ENCODE measurements at regions of chr3 and their contacts with region 1.

Region 1: DNA sequence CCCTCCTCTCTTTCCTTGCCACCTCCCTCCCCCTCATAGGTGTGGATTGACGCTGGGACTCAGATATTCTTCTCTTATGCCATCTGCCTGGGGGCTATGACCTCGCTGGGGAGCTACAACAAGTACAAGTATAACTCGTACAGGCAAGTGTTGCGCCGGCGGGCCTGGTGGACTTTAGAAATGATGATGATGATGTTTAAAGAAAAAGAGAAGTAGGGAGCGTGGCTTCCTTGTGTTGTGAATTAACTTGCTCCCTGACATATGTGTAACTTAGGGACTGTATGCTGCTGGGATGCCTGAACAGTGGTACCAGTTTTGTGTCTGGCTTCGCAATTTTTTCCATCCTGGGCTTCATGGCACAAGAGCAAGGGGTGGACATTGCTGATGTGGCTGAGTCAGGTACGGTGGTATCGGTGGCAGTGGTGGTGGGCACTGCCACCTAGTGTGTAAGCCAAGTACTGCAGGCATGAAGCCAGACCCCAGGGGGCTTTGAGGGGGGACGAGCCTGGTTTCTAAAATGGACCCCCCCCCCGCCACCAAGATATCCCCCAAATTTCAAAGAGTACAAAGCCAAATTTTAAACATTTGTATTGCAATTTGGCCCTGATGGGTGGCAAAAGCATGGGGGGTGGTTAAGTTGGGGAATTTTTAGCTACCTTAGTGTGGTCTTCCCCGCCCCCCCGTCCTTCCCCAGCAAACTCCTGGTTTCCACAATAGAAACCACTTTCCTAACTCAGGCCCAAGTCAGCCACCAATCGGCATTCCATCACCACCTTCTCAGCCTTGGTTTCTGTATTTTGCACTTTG is 65.6 kb downstream of the SLC6A6 start:
- DNase-seq: peak; percentile 34
- H3K4me3 ChIP-seq: no peak overlapping the region
- H3K27ac ChIP-seq: no peak overlapping the region
- H3K4me1 ChIP-seq: peaks cover 16 to 28% of the 10 kb centered on the region in 2 donors
- H3K27me3 ChIP-seq: no peaks in the 10 kb centered on the region
- CTCF ChIP-seq: peak; percentile 75 to 89 (median 84)
- POLR2A ChIP-seq: no peak

Region 2: GRCh38 chr3:14261229-14261628 is 206.8 kb before region 1 on chr3:
- intact Hi-C with region 1: loop called (anchors 5 kb)
- DNase-seq: peak; percentile 83 to 87
- H3K4me3 ChIP-seq: no peak overlapping the region
- H3K27ac ChIP-seq: no peak overlapping the region
- H3K4me1 ChIP-seq: peaks cover 0 to 11% of the 10 kb centered on the region in 2 donors
- H3K27me3 ChIP-seq: no peaks in the 10 kb centered on the region
- CTCF ChIP-seq: peak; percentile 88 to 97 (median 96)
- POLR2A ChIP-seq: no peak

Region 3: DNA sequence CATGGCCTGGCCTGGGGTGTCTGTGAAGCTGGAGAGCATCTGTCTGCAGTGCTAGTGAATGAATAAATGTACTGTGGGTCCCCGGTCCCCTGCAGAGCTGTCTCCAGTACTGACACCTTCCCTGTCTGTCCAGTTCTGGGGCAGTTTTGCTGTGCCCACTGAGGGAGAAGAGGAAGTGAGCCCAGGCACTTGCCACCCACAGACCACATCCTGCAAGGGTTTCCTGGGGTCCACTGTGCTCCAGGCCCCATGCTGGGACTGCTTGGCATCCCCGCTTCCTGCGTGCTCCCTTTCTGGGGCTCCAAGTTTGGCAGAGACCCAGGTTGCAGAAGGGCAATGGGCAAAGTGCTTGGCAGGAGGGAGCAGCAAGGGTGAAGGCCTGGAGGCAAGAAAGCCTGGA is 70.5 kb before region 1 on chr3:
- intact Hi-C with region 1: loop called (anchors 5 kb)
- DNase-seq: no peak
- H3K4me3 ChIP-seq: no peak overlapping the region
- H3K27ac ChIP-seq: no peak overlapping the region
- H3K4me1 ChIP-seq: no peaks in the 10 kb centered on the region
- H3K27me3 ChIP-seq: no peaks in the 10 kb centered on the region
- CTCF ChIP-seq: no peak
- POLR2A ChIP-seq: no peak

Measured in thyroid gland (tissue), 4 donors.